KBM-7 (cell line): ENCODE measurements at regions of chr15 and their contacts with region 1.

Region 1: GRCh38 chr15:91049378-91050127 is 27.2 kb upstream of the VPS33B start:
- DNase-seq: peak; percentile 82

Region 2: GRCh38 chr15:90729261-90729660 is 320.3 kb before region 1 on chr15:
- in situ Hi-C with region 1: no loop called
- DNase-seq: peak; percentile 79

Region 3: DNA sequence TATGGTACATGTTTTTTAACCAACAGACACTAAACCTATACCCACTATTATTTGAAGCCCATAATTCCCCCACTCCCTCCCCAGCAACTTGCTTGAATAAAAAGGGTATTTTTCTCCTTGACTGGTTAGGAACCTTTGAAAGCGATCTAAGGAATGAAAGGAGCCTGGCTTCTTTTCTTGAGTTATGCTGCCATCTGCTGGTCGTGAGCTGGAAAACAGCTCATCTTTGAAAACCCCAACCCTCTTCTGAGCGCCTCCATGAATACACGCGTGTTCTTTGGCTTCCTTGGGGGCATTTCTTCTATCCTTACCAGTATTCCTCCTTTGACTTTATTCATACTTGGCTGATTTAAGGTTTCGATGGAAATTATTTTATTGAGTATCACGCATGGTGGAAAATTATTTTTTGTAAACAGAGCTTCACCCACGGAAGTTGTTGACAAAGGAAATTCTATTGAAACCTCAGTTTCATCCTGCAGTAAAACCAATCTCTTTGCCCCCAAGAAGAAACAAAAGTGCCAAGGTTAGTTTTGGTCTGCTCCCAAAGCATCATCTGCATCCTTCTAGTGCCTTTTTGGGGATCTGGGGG is 222.1 kb after region 1 on chr15:
- in situ Hi-C with region 1: loop called (anchors 10 kb)
- DNase-seq: peak; percentile 87